ENCODE measurements at regions of chr6 and their contacts with region 1.

Region 1: GRCh38 chr6:44246663-44247337 is at the start of gene HSP90AB1:
- DNase-seq: peak; percentile 91 to 99 (median 94)
- ATAC-seq: peak; percentile 83
- H3K4me3 ChIP-seq: peak within 1 kb of the TSS; percentile 70
- H3K4me3 Mint-ChIP-seq: peak within 1 kb of the TSS; percentile 96
- H3K27ac ChIP-seq: peak within 1 kb of the TSS; percentile 92 to 98
- H3K27ac Mint-ChIP-seq: peak within 1 kb of the TSS; percentile 93
- H3K4me1 ChIP-seq: peaks cover 37% of the 10 kb centered on the region
- H3K4me1 Mint-ChIP-seq: peaks cover 47% of the 10 kb centered on the region
- H3K27me3 ChIP-seq: no peaks in the 10 kb centered on the region
- H3K27me3 Mint-ChIP-seq: peaks cover 5% of the 10 kb centered on the region
- CTCF ChIP-seq: no peak
- total RNA-seq, gene HSP90AB1: 401 to 405 TPM

Region 2: DNA sequence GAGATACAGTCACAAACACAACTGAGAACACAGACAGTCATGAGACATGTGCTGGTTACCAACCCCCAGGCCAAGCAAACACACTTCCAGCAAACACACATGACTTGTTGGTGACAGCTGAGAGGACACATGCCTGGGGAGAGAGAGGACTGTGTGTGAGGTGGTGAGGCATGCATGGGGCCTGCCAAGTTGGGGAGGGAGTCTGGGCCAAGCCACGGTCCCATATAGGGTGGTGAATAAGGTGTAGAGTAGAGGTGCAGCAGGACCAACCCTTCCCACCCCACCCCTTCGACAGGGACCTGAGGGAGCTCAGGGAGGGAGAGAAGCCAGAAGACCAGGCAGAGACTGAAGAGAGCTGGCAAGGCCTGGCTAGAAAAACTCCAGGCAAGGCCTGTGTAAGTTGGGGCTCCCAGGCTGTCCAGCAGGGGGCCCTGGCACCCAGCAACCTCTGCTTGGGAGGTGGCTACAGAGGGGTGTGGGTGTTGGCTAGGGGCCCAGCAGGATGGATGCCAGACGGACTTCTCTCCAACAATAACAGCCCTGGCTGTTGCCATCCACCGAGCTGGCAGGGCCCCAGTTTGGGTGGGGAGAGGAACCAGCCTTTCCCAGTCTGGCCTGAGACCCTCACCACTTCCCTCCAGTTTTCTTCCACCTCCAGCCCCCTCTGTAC is 25.4 kb before region 1 on chr6:
- CTCF ChIA-PET with region 1: interaction called, 4 read pairs
- POLR2A ChIA-PET with region 1: interaction called, 62 read pairs
- intact Hi-C with region 1: no loop called
- DNase-seq: peak; percentile 60 to 88 (median 72)
- ATAC-seq: peak; percentile 67
- H3K4me3 ChIP-seq: no peak overlapping the region
- H3K4me3 Mint-ChIP-seq: peak overlapping the region; percentile 77
- H3K27ac ChIP-seq: no peak overlapping the region
- H3K27ac Mint-ChIP-seq: peak overlapping the region; percentile 39
- H3K4me1 ChIP-seq: peaks cover 38% of the 10 kb centered on the region
- H3K4me1 Mint-ChIP-seq: peaks cover 36% of the 10 kb centered on the region
- H3K27me3 ChIP-seq: peaks cover 4 to 7% of the 10 kb centered on the region in 2 experiments
- H3K27me3 Mint-ChIP-seq: no peaks in the 10 kb centered on the region
- CTCF ChIP-seq: peak; percentile 66

Region 3: DNA sequence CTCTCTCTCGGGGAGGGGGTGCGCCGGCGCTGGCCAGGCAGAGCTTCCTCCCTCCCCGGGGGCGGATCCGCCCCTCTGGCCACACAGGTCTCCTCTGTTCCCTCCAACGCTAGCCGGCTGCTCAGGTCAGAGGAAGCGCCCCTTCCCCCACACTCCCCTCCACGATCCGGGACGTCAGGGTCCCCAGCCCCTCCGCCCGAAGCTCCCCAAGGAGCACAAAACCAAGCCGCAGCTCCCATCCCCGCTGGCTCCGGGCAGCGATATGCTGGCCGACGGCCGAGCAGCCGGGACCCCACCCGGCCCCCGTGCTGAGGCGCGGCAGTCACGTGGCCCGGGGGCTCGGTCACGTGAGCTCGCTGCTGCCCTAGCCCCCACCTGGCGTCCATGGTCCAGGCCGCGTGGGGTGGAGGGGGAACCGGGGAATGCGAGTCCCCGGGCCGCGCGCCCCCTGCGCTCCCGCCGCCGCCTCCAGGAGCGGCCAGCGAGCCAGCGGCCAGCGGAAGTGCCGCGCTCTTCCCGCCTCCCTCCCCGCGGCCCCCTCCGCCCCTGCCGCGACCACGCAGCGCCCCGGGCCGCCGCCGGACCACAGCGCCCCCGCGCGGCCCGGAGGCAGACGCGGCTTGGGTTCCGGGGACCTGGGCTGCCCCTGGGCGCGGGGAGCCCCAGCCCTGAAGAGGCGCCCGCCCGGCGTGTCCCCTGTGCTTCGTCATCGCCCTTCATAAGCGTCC is 10.4 kb after region 1 on chr6 and contains the start of gene SLC35B2:
- CTCF ChIA-PET with region 1: interaction called, 12 read pairs
- POLR2A ChIA-PET with region 1: interaction called, 135 read pairs
- intact Hi-C with region 1: loop called in 1 of 2 experiments (anchors 1 kb)
- DNase-seq: peak in 13 of 14 experiments; percentile 33 to 89 (median 56)
- ATAC-seq: peak; percentile 84
- H3K4me3 ChIP-seq: peak within 1 kb of the TSS; percentile 95
- H3K4me3 Mint-ChIP-seq: peak within 1 kb of the TSS; percentile 90
- H3K27ac ChIP-seq: peak within 1 kb of the TSS; percentile 63 to 76
- H3K27ac Mint-ChIP-seq: peak within 1 kb of the TSS; percentile 78
- H3K4me1 ChIP-seq: peaks cover 52% of the 10 kb centered on the region
- H3K4me1 Mint-ChIP-seq: peaks cover 57% of the 10 kb centered on the region
- H3K27me3 ChIP-seq: no peaks in the 10 kb centered on the region
- H3K27me3 Mint-ChIP-seq: no peaks in the 10 kb centered on the region
- CTCF ChIP-seq: peak; percentile 29
- total RNA-seq, gene SLC35B2: 6.4 to 7.0 TPM

Region 4: GRCh38 chr6:44278774-44279697 is 32.2 kb after region 1 on chr6:
- CTCF ChIA-PET with region 1: no interaction called
- POLR2A ChIA-PET with region 1: no interaction called
- intact Hi-C with region 1: no loop called
- DNase-seq: no peak
- ATAC-seq: no peak
- H3K4me3 ChIP-seq: no peak overlapping the region
- H3K4me3 Mint-ChIP-seq: no peak overlapping the region
- H3K27ac ChIP-seq: no peak overlapping the region
- H3K27ac Mint-ChIP-seq: no peak overlapping the region
- H3K4me1 ChIP-seq: peaks cover 11% of the 10 kb centered on the region
- H3K4me1 Mint-ChIP-seq: peaks cover 5% of the 10 kb centered on the region
- H3K27me3 ChIP-seq: peaks cover 33 to 40% of the 10 kb centered on the region in 2 experiments
- H3K27me3 Mint-ChIP-seq: peaks cover 55% of the 10 kb centered on the region
- CTCF ChIP-seq: no peak

Region 5: GRCh38 chr6:44387346-44388133 is 140.7 kb after region 1 on chr6 and contains the start of gene CDC5L:
- CTCF ChIA-PET with region 1: no interaction called
- POLR2A ChIA-PET with region 1: interaction called, 12 read pairs
- intact Hi-C with region 1: no loop called
- DNase-seq: peak; percentile 74 to 98 (median 86)
- ATAC-seq: peak; percentile 81
- H3K4me3 ChIP-seq: peak within 1 kb of the TSS; percentile 84
- H3K4me3 Mint-ChIP-seq: peak within 1 kb of the TSS; percentile 97
- H3K27ac ChIP-seq: peak within 1 kb of the TSS; percentile 89 to 93
- H3K27ac Mint-ChIP-seq: peak within 1 kb of the TSS; percentile 93
- H3K4me1 ChIP-seq: peaks cover 19% of the 10 kb centered on the region
- H3K4me1 Mint-ChIP-seq: peaks cover 40% of the 10 kb centered on the region
- H3K27me3 ChIP-seq: no peaks in the 10 kb centered on the region
- H3K27me3 Mint-ChIP-seq: no peaks in the 10 kb centered on the region
- CTCF ChIP-seq: no peak
- total RNA-seq, gene CDC5L: 18.9 to 19.9 TPM

Region 6: DNA sequence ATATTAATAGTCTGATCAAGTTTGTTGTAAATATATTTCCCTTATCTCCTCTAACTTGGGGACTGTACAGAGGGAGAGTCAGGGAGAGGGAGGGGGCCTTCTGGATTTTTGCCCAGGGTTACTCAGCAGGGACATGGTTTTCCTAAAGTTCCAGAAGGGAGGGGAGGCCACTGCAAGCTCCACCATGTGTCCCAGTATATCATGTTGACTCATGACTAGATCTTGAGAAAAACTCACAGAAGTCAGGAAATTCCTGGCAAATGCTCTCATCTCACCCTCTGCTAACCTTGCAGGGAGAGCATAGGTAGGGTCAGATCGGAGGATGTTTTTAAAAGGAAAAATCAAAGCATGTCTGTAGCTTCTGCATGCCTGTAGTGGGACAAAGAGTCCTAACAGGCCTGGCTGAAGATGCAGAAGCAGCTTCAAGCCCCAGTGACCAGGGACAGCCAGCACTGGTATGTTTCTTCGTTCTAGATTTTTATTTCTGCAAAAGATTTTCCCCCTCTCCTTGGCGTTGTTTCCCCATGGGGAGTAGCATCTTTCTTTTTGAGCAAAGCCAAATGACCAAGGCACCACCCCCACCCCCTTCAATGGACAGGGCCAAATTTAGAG is 1403.8 kb after region 1 on chr6:
- CTCF ChIA-PET with region 1: no interaction called
- POLR2A ChIA-PET with region 1: no interaction called
- intact Hi-C with region 1: no loop called
- DNase-seq: no peak
- ATAC-seq: no peak
- H3K4me3 ChIP-seq: no peak overlapping the region
- H3K4me3 Mint-ChIP-seq: no peak overlapping the region
- H3K27ac ChIP-seq: no peak overlapping the region
- H3K27ac Mint-ChIP-seq: no peak overlapping the region
- H3K4me1 ChIP-seq: no peaks in the 10 kb centered on the region
- H3K4me1 Mint-ChIP-seq: peaks cover 15% of the 10 kb centered on the region
- H3K27me3 ChIP-seq: no peaks in the 10 kb centered on the region
- H3K27me3 Mint-ChIP-seq: no peaks in the 10 kb centered on the region
- CTCF ChIP-seq: no peak

Measured in CD4-positive, alpha-beta T cell (primary cell).